Activated CD4-positive, alpha-beta T cell treated with anti-CD3 and anti-CD28 coated beads for 36 hours (primary cell): ENCODE measurements at regions of chr9 and their contacts with region 1.

Region 1: DNA sequence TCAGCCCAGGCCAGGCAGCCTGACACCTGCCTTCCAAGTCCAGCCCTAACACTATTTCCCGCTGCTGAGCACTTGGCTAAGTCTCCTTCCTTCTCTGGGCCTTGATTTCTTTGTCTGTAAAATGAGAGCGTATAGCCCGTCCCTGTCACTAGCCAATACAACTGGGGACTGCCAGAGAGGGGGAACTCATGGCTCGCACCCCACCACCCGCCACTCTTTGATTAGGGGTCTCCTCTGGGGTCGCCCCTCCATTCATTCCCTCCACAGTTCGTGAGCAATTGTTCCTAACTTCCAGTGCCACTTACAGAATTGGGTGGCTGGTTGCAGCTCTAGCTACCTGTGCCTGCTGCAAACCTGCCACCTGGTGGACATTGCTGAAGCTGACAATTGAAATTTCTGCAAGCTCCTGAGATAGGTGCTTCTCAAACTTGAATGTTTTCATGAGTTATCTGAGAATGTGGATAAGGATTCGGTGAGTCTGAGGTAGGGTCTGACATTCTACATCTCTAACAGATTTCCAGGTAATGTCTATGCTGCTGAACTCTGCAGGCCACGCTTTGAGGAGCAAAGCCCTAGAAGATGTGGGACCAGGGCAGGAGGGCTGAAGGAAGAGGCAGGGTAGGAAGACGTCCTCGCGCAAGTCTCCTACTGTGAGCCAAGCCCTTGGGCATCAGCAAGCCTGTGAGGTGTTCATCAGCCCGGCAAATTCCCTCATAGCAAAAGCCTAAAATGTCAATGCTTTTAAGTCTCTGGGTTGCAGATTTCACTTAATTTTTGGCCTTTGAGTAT is 13.3 kb upstream of the RECK start:
- DNase-seq: peak; percentile 83
- ATAC-seq: peak; percentile 90
- H3K4me3 Mint-ChIP-seq: no peak overlapping the region
- H3K27ac Mint-ChIP-seq: no peak overlapping the region
- H3K4me1 Mint-ChIP-seq: no peaks in the 10 kb centered on the region
- H3K27me3 Mint-ChIP-seq: no peaks in the 10 kb centered on the region

Region 2: DNA sequence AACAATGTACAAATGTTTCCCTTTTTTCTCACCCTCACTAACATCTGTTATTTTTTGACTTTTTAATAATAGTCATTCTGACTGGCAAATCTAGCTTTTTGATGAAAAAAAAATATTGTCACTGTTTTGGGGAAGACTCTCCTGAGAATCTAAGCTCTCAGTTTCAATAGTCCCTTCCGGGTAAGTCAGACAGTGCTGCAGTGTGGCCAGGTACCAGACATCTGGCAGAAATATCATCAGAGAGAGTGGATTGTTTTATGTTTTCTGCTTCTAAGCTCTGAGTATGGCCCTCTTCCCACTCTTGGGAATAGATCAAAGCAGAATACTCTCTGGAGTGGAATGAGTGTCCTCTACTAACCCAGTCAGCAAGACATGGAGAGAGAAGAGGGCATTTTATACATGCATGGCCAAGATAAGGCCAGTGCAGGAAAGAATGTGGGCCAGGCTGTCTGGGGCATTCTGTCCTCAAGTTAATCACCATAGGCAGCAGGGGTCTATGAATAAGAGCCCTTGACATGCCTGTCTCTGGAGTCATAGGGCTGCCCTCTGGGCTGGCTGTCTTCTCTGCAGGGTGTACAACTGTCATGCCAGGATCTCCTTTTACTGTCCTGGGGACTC is 27.0 kb before region 1 on chr9:
- CTCF ChIA-PET with region 1: interaction called, 5 read pairs
- POLR2A ChIA-PET with region 1: no interaction called
- intact Hi-C with region 1: loop called in 1 of 2 experiments (anchors 1 kb)
- DNase-seq: no peak
- ATAC-seq: no peak
- H3K4me3 Mint-ChIP-seq: no peak overlapping the region
- H3K27ac Mint-ChIP-seq: no peak overlapping the region
- H3K4me1 Mint-ChIP-seq: no peaks in the 10 kb centered on the region
- H3K27me3 Mint-ChIP-seq: peaks cover 19% of the 10 kb centered on the region

Region 3: DNA sequence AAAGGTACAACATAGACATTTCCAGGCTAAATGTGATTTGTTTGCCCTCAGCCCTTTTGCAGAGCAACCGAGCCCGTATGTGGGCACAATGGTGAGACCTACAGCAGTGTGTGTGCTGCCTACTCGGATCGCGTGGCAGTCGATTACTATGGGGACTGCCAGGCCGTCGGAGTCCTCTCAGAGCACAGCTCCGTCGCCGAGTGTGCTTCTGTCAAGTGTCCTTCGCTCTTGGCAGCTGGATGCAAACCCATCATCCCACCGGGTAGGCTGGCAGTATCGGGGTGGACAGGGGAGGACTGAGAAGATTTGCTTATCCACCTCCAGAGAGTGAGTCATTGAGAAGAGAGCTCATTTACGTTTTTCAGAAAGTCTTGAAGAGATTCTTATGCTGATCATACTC is 95.3 kb after region 1 on chr9:
- CTCF ChIA-PET with region 1: no interaction called
- POLR2A ChIA-PET with region 1: no interaction called
- intact Hi-C with region 1: no loop called
- DNase-seq: no peak
- ATAC-seq: no peak
- H3K4me3 Mint-ChIP-seq: no peak overlapping the region
- H3K27ac Mint-ChIP-seq: no peak overlapping the region
- H3K4me1 Mint-ChIP-seq: no peaks in the 10 kb centered on the region
- H3K27me3 Mint-ChIP-seq: no peaks in the 10 kb centered on the region

Region 4: DNA sequence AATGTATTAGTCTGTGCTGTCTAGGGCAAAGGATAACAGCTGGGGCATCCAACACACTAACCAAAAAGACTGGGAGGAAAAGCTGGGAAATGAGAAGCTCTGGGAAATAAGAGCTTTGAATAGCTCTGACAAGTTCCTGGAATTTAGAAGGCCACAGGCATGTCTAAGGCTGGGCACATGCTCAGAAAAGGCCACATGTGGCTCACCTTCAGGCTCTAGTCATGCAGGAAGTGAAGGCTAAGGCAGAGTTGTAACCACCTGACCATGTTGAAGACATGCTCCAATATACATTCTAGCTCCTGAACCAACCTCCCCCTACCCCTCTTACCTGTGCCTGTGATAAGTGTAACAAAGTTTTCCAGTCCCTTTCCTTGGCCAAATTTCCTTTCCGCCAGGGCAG is 199.0 kb after region 1 on chr9:
- CTCF ChIA-PET with region 1: no interaction called
- POLR2A ChIA-PET with region 1: no interaction called
- intact Hi-C with region 1: no loop called
- DNase-seq: no peak
- ATAC-seq: no peak
- H3K4me3 Mint-ChIP-seq: no peak overlapping the region
- H3K27ac Mint-ChIP-seq: peak overlapping the region; percentile 26
- H3K4me1 Mint-ChIP-seq: peaks cover 19% of the 10 kb centered on the region
- H3K27me3 Mint-ChIP-seq: no peaks in the 10 kb centered on the region